Psoas muscle (tissue), 8 donors: ENCODE measurements at regions of chr10 and their contacts with region 1.

Region 1: GRCh38 chr10:17257466-17258321 is 29.7 kb downstream of the VIM start:
- DNase-seq: no peak
- ATAC-seq: peak; percentile 72 to 96 (median 80)
- H3K4me3 ChIP-seq: peak overlapping the region; percentile 28
- H3K27ac ChIP-seq: no peak overlapping the region
- H3K4me1 ChIP-seq: no peaks in the 10 kb centered on the region
- H3K27me3 ChIP-seq: no peaks in the 10 kb centered on the region
- CTCF ChIP-seq: peak; percentile 86

Region 2: GRCh38 chr10:16828114-16828568 is 429.6 kb before region 1 on chr10:
- intact Hi-C with region 1: loop called (anchors 5 kb)
- DNase-seq: peak in 1 of 2 donors; percentile 25
- ATAC-seq: peak; percentile 77 to 96 (median 80)
- H3K4me3 ChIP-seq: peak overlapping the region; percentile 17
- H3K27ac ChIP-seq: peak overlapping the region; percentile 3
- H3K4me1 ChIP-seq: no peaks in the 10 kb centered on the region
- H3K27me3 ChIP-seq: no peaks in the 10 kb centered on the region
- CTCF ChIP-seq: peak; percentile 61

Region 3: DNA sequence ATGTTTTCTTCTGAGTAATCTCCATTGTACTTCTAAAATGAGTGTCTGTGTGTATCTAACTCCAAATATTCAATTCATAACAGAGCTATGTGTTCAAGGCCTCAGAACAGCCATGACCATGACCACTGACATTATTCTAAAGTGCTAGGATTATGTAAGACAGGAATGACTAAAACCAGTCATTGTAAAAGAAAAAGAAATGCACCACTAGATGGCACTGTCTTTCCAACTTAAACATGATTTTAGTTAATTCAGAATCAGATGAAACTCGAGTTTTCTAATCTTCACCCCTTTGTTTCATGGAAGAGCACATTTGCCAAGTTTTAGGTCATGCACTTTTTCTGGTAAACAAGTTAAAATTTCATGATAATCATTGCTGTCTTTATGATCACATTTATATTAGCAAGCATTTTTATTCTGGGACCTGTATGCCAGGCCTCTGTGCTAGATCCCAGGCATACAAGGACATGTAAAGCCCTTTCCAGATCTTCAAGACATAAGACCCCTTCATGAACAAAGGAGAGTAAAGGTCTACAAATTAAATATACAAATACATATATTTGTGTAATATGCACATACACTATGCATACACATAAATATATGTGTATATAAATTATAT is 414.3 kb before region 1 on chr10:
- intact Hi-C with region 1: loop called (anchors 1 to 2 kb)
- DNase-seq: no peak
- ATAC-seq: peak in 3 of 4 donors; percentile 52 to 77 (median 67)
- H3K4me3 ChIP-seq: no peak overlapping the region
- H3K27ac ChIP-seq: no peak overlapping the region
- H3K4me1 ChIP-seq: no peaks in the 10 kb centered on the region
- H3K27me3 ChIP-seq: no peaks in the 10 kb centered on the region
- CTCF ChIP-seq: peak; percentile 73